ENCODE measurements at regions of chr12 and their contacts with region 1.

Region 1: DNA sequence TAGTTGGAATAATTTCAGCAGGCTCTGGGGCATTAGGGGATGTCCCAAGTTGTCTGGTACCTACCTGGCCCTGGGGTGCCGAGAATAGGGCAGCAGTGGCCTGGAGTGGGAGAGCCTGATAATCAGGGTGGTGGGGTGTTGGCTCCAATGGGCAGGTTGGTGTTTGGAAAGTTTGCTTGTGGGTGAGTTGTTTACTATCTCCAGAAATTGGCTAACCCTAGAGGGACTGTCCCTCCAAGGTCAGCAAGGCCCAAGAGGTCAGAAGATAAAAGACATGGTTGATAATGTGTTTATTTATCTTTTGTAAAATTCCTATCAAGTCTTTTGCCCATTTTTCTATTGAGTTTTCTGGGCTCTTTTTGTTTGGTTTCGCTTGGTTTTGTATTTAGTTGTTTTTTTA is 105.1 kb downstream of the KICS2 start:
- DNase-seq: no peak
- H3K4me3 ChIP-seq: no peak overlapping the region
- H3K27ac ChIP-seq: no peak overlapping the region
- H3K4me1 ChIP-seq: no peaks in the 10 kb centered on the region
- H3K27me3 ChIP-seq: no peaks in the 10 kb centered on the region
- CTCF ChIP-seq: no peak
- POLR2A ChIP-seq: no peak

Region 2: DNA sequence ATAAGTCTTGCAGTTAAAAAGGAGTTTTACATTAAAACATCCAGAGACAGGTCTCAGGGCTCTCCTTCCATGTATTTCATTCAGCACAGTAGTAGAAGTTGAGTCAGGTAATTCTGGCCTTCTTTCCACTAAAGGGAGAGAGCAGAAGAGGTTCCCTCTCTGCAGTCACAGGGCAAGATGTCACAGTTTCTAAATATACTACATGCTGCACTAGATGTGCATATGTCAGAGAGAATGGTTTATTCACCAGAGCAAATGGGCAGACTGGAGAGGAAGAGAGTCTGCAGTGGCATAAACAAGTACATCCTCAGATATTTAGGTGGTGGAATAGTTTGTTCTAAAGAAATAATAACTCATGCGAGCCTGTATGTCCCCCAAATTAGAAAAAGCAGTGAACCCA is 26.9 kb before region 1 on chr12:
- intact Hi-C with region 1: loop called (anchors 2 kb)
- DNase-seq: no peak
- H3K4me3 ChIP-seq: no peak overlapping the region
- H3K27ac ChIP-seq: peak overlapping the region in 1 of 2 donors; percentile 89
- H3K4me1 ChIP-seq: peaks cover 0 to 15% of the 10 kb centered on the region in 2 donors
- H3K27me3 ChIP-seq: no peaks in the 10 kb centered on the region
- CTCF ChIP-seq: no peak
- POLR2A ChIP-seq: no peak

Region 3: GRCh38 chr12:64147011-64147631 is 30.2 kb after region 1 on chr12:
- intact Hi-C with region 1: no loop called
- DNase-seq: no peak
- H3K4me3 ChIP-seq: no peak overlapping the region
- H3K27ac ChIP-seq: no peak overlapping the region
- H3K4me1 ChIP-seq: no peaks in the 10 kb centered on the region
- H3K27me3 ChIP-seq: no peaks in the 10 kb centered on the region
- CTCF ChIP-seq: no peak
- POLR2A ChIP-seq: no peak